ENCODE measurements at regions of chr15 and their contacts with region 1.

Region 1: GRCh38 chr15:62254137-62254934 is 89.3 kb upstream of the C2CD4B start:
- DNase-seq: peak; percentile 75 to 76
- ATAC-seq: peak; percentile 65 to 91 (median 77)
- H3K4me3 ChIP-seq: no peak overlapping the region
- H3K27ac ChIP-seq: no peak overlapping the region
- H3K4me1 ChIP-seq: peaks cover 0 to 6% (median 0%) of the 10 kb centered on the region in 9 donors
- H3K27me3 ChIP-seq: no peaks in the 10 kb centered on the region
- CTCF ChIP-seq: peak; percentile 60 to 81 (median 77)

Region 2: GRCh38 chr15:61186905-61187741 is 1067.2 kb before region 1 on chr15:
- intact Hi-C with region 1: no loop called
- DNase-seq: peak in 1 of 2 donors; percentile 39
- ATAC-seq: peak in 7 of 8 donors; percentile 56 to 77 (median 72)
- H3K4me3 ChIP-seq: peak overlapping the region in 5 of 10 donors; percentile 3 to 18 (median 14)
- H3K27ac ChIP-seq: peak overlapping the region in 2 of 10 donors; percentile 6 to 39
- H3K4me1 ChIP-seq: peaks cover 0 to 12% (median 0%) of the 10 kb centered on the region in 9 donors
- H3K27me3 ChIP-seq: peaks cover 0 to 10% (median 0%) of the 10 kb centered on the region in 7 donors
- CTCF ChIP-seq: no peak

Region 3: DNA sequence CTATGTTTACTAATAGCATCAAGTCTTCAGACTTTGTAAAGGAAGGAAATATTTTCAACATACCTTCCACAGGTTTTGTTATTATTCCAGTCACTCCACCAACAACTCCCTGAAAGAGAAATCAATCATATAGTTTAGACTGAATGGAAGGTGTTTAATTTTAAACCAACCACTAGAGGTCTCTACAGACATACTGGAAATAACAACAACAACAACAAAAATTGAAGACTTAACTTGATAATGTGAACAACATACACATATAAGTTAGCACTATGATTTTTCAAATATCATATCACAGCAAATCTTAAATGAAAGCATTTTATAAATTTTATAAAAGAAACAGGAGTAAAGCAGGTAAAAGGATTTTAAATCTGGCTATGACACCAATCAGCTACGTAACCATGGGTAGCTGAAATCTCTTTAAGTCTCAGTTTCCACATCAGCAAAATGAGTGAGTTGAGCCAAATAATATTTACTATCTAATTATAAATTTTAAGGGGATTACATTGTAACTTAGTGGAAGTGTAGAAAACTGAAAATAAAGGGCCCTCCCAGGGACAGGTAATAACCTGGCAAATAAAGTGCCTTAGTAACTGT is 382.3 kb before region 1 on chr15:
- intact Hi-C with region 1: loop called in 1 of 10 experiments (anchors 5 kb)
- DNase-seq: no peak
- ATAC-seq: no peak
- H3K4me3 ChIP-seq: no peak overlapping the region
- H3K27ac ChIP-seq: no peak overlapping the region
- H3K4me1 ChIP-seq: no peaks in the 10 kb centered on the region
- H3K27me3 ChIP-seq: no peaks in the 10 kb centered on the region
- CTCF ChIP-seq: peak; percentile 20 to 70 (median 54)

Region 4: GRCh38 chr15:62066663-62067447 is 187.5 kb before region 1 on chr15 and contains the start of gene C2CD4A:
- intact Hi-C with region 1: loop called in 2 of 10 experiments (anchors 5 to 10 kb)
- DNase-seq: peak; percentile 54 to 56
- ATAC-seq: peak; percentile 58 to 90 (median 76)
- H3K4me3 ChIP-seq: peak within 1 kb of the TSS in 9 of 10 donors; percentile 45 to 71 (median 57)
- H3K27ac ChIP-seq: peak within 1 kb of the TSS in 3 of 10 donors; percentile 6 to 56 (median 38)
- H3K4me1 ChIP-seq: peaks cover 2 to 35% (median 19%) of the 10 kb centered on the region in 9 donors
- H3K27me3 ChIP-seq: peaks cover 0 to 30% (median 0%) of the 10 kb centered on the region in 7 donors
- CTCF ChIP-seq: peak in 3 of 9 donors; percentile 19 to 33 (median 26)
- total RNA-seq, gene C2CD4A: 0.25 TPM in 1 of 10 donors, not detected in the others

Region 5: GRCh38 chr15:62125773-62126172 is 128.6 kb before region 1 on chr15:
- intact Hi-C with region 1: loop called in 3 of 10 experiments (anchors 5 to 10 kb)
- DNase-seq: peak in 1 of 2 donors; percentile 38
- ATAC-seq: peak in 7 of 8 donors; percentile 46 to 91 (median 77)
- H3K4me3 ChIP-seq: no peak overlapping the region
- H3K27ac ChIP-seq: no peak overlapping the region
- H3K4me1 ChIP-seq: peaks cover 0 to 33% (median 7%) of the 10 kb centered on the region in 9 donors
- H3K27me3 ChIP-seq: no peaks in the 10 kb centered on the region
- CTCF ChIP-seq: peak; percentile 11 to 67 (median 44)

Region 6: DNA sequence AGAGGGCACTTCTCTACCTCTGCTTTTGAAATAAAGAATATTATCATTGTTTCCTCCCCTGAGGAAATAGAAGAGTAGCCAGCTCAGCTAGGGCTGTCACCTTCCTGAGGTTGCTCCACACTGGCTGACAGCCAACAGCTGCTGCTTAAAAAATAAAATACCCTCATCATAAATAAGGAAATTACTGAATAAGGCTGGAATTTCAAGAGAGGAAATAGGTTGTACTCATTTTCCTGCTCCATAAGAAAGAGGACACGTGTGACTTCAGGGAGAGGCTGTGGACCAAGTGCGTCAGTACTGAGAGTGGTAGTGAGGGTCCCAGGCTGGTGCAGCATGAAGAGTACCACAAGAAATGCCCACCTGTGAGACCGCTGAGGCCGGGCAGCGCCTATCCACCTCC is 81.1 kb before region 1 on chr15:
- intact Hi-C with region 1: loop called in 2 of 10 experiments (anchors 10 kb)
- DNase-seq: peak; percentile 38 to 81
- ATAC-seq: peak; percentile 79 to 94 (median 92)
- H3K4me3 ChIP-seq: peak overlapping the region in 8 of 10 donors; percentile 6 to 51 (median 28)
- H3K27ac ChIP-seq: peak overlapping the region; percentile 20 to 91 (median 75)
- H3K4me1 ChIP-seq: peaks cover 0 to 43% (median 16%) of the 10 kb centered on the region in 9 donors
- H3K27me3 ChIP-seq: peaks cover 0 to 10% (median 0%) of the 10 kb centered on the region in 7 donors
- CTCF ChIP-seq: no peak

Region 7: DNA sequence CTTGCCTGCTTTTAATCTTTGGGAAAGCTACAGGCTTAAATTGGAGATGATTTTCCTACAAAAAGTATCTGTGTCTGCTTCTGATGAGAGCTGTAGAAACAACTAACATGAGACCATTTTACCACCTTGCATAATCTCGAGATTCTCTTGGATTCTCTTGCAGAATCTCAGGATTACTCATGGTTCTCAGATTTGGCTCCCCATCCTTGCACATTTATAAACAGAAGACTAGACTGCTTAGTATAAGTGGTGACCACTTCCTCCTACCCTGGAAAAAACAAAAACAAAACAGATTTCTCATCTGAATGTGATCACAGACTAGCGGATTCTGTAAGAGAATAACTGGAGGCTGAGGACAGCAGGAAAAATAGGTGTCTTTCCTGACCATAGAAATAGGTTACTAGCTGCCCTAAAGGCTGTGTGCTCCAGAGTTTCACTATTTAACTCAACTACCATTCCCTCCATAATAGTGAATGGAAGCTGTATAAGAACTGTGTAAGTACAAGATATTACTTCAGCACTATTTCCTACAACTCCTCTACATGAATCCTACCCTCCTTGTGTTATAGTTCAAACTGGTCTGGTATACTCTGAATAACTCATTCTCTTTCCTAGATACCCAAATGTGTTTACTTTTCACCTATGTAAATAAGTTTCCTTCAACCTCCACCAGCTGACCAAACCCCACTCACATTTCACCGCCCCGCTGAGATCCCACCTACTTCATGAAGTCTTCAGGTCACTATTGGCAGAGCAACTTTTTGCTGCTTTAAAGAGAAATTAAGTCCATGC is 32.9 kb after region 1 on chr15:
- intact Hi-C with region 1: no loop called
- DNase-seq: no peak
- ATAC-seq: no peak
- H3K4me3 ChIP-seq: no peak overlapping the region
- H3K27ac ChIP-seq: no peak overlapping the region
- H3K4me1 ChIP-seq: no peaks in the 10 kb centered on the region
- H3K27me3 ChIP-seq: peaks cover 0 to 37% (median 18%) of the 10 kb centered on the region in 7 donors
- CTCF ChIP-seq: no peak

Region 8: GRCh38 chr15:62377736-62378480 is 123.6 kb after region 1 on chr15:
- intact Hi-C with region 1: no loop called
- DNase-seq: no peak
- ATAC-seq: no peak
- H3K4me3 ChIP-seq: no peak overlapping the region
- H3K27ac ChIP-seq: no peak overlapping the region
- H3K4me1 ChIP-seq: peaks cover 0 to 14% (median 0%) of the 10 kb centered on the region in 9 donors
- H3K27me3 ChIP-seq: peaks cover 0 to 8% (median 0%) of the 10 kb centered on the region in 7 donors
- CTCF ChIP-seq: no peak

Measured in heart right ventricle (tissue), 16 donors.